ENCODE measurements at regions of chr6 and their contacts with region 1.

Region 1: DNA sequence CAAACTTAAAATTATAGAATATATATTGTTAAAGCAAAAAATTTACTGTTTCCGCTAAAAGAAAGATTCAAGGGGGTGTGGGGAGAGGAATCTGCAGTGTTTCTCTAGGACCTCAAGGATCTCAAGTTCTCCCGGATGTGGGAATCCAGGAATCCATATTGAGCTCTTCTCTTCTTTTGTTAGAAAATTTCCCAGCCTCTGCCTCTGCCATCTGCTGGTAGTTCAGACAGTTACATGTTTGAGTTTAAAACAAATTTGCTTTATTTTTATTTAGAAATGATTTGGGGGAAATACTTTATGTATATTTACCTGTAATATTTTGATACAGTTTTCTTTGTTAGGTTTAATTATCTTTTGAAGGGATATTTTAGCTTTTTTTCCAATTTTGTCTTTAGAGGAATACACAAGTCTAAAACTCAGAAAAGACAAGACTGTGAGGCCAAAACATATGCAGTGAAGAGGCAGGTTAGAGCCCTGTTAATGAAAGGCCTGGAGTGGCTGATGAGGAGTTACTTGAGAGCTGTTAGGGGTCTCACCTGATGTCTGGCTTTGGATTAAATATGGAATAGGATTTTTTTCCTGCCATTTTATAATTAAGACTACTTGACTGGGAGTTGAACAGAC is 268.8 kb downstream of the ARID1B start:
- DNase-seq: no peak
- H3K4me3 ChIP-seq: no peak overlapping the region
- H3K27ac ChIP-seq: no peak overlapping the region
- H3K27me3 ChIP-seq: no peaks in the 10 kb centered on the region
- CTCF ChIP-seq: peak; percentile 75

Region 2: DNA sequence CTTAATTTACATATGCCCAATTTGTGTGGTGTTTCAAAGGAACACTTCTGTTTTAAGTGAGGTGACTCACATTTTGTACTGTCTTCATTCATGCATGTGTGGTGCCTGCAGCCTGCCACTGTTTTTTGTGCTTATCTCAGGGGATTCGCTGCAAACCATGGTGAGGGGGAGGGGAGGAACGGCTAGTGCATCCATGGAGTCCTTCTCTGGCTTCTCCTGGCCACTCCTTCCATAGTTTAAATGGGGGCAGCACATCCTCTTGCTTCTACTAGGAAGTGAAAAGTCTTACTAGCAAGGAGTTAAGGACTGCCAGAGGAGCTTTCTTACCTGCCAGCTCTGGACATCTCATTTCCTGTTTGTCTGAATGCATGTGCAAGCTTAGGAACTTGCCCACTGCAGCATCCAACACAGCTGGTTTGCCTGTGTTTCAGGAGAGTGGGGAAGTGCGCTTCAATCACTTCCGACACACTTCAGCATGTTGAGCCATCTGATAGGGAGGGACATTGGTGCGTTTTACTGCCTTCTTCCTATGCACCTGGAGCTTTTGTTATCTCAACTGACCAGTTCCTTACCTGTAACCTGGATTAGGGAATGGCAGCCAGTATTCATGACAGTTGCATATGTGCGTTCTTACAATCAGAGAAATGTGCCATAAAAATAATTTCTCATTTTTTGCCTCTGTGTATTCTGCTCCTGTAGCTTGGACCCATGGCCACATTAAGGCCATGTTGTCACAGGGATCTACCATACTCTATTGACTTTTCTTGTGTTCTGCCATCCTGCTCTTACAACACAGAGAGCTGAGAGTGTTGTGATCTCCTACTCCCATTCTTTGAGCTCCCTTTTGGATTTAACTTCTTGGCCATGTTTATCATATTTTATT is 57.4 kb before region 1 on chr6:
- CTCF ChIA-PET with region 1: interaction called, 10 read pairs
- POLR2A ChIA-PET with region 1: no interaction called
- DNase-seq: no peak
- H3K4me3 ChIP-seq: no peak overlapping the region
- H3K27ac ChIP-seq: no peak overlapping the region
- H3K27me3 ChIP-seq: no peaks in the 10 kb centered on the region
- CTCF ChIP-seq: no peak

Region 3: GRCh38 chr6:156998794-156999330 is 47.1 kb before region 1 on chr6:
- CTCF ChIA-PET with region 1: no interaction called
- POLR2A ChIA-PET with region 1: no interaction called
- DNase-seq: no peak
- H3K4me3 ChIP-seq: no peak overlapping the region
- H3K27ac ChIP-seq: no peak overlapping the region
- H3K27me3 ChIP-seq: no peaks in the 10 kb centered on the region
- CTCF ChIP-seq: no peak

Region 4: GRCh38 chr6:157021344-157021992 is 24.5 kb before region 1 on chr6:
- CTCF ChIA-PET with region 1: interaction called, 11 read pairs
- POLR2A ChIA-PET with region 1: no interaction called
- DNase-seq: peak; percentile 59
- H3K4me3 ChIP-seq: peak overlapping the region; percentile 70
- H3K27ac ChIP-seq: peak overlapping the region; percentile 99
- H3K27me3 ChIP-seq: no peaks in the 10 kb centered on the region
- CTCF ChIP-seq: peak; percentile 46

Region 5: GRCh38 chr6:157034436-157035230 is 11.3 kb before region 1 on chr6:
- CTCF ChIA-PET with region 1: interaction called, 47 read pairs
- POLR2A ChIA-PET with region 1: no interaction called
- DNase-seq: no peak
- H3K4me3 ChIP-seq: no peak overlapping the region
- H3K27ac ChIP-seq: no peak overlapping the region
- H3K27me3 ChIP-seq: no peaks in the 10 kb centered on the region
- CTCF ChIP-seq: peak; percentile 79

Region 6: DNA sequence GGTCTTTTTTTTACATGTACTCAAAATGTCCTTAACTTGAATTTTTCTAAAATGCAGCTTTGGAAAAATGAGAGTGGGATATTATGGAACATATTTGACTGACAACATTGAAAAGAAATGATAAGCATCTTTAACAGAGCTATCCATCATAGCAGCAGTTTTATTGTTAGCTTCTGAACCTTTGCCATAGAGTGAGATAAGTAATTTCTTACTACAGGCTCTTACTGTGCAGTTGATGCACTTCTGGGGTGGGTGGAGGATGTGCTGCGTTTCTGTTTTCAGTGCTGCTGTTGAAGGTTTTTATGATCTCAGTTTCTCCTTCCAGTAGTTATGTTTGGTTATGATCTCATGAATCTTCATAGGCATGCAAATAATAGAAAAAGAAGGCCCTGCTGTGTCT is 10.3 kb after region 1 on chr6:
- CTCF ChIA-PET with region 1: interaction called, 23 read pairs
- POLR2A ChIA-PET with region 1: no interaction called
- DNase-seq: no peak
- H3K4me3 ChIP-seq: no peak overlapping the region
- H3K27ac ChIP-seq: no peak overlapping the region
- H3K27me3 ChIP-seq: no peaks in the 10 kb centered on the region
- CTCF ChIP-seq: no peak

Region 7: GRCh38 chr6:157080986-157081391 is 35.0 kb after region 1 on chr6:
- CTCF ChIA-PET with region 1: interaction called, 10 read pairs
- POLR2A ChIA-PET with region 1: no interaction called
- DNase-seq: no peak
- H3K4me3 ChIP-seq: no peak overlapping the region
- H3K27ac ChIP-seq: no peak overlapping the region
- H3K27me3 ChIP-seq: no peaks in the 10 kb centered on the region
- CTCF ChIP-seq: no peak

Region 8: DNA sequence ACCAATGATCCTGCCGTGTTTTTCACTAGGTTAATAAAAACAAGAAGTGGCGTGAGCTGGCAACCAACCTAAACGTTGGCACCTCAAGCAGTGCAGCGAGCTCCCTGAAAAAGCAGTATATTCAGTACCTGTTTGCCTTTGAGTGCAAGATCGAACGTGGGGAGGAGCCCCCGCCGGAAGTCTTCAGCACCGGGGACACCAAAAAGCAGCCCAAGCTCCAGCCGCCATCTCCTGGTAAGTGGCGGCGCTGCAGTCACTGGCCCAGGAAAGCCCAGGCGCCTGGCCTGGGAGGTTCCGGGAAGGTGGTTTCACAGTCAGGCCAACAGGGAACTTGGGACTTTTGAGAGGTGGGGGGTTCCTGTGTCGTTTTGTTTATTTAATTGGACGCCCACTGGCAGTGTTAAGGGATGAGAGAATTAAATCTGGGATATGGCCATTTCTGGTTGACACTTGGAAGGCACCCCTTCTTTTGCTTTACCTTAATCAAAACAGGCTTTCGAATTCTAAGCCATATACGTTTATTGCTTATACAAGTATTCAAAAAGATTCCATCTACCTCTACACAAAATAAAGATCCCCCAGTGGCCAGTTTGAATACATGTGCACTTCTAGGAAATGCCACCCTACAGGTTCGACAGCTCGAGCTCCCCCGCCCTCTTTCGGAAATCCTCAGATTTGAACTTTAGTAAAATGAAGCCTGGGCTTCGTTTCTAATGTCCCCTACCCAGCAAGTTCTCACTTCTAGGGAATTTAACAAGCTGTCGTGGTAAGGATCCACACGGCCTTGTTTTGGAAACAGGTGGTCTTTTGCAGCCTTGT is 138.5 kb after region 1 on chr6:
- CTCF ChIA-PET with region 1: interaction called, 12 read pairs
- POLR2A ChIA-PET with region 1: no interaction called
- DNase-seq: peak; percentile 15
- H3K4me3 ChIP-seq: no peak overlapping the region
- H3K27ac ChIP-seq: no peak overlapping the region
- H3K27me3 ChIP-seq: no peaks in the 10 kb centered on the region
- CTCF ChIP-seq: peak; percentile 94